ENCODE measurements at regions of chr4 and their contacts with region 1.

Region 1: GRCh38 chr4:30770049-30770549 is 49.9 kb downstream of the PCDH7 start:
- DNase-seq: peak; percentile 97
- ATAC-seq: peak; percentile 77
- H3K4me3 ChIP-seq: no peak overlapping the region
- H3K27ac ChIP-seq: peak overlapping the region; percentile 100
- H3K4me1 ChIP-seq: peaks cover 77 to 98% of the 10 kb centered on the region in 2 experiments
- H3K27me3 ChIP-seq: no peaks in the 10 kb centered on the region
- CTCF ChIP-seq: 0 out of 6 replicates have a peak, but pooled peaks of 1 of the 3 experiments have one; percentile 5
- POLR2A ChIP-seq: no peak
- RAD21 ChIP-seq: peak; percentile 46

Region 2: GRCh38 chr4:30783751-30784150 is 13.7 kb after region 1 on chr4:
- CTCF ChIA-PET with region 1: no interaction called
- POLR2A ChIA-PET with region 1: interaction called, 40 read pairs
- RAD21 ChIA-PET with region 1: no interaction called
- intact Hi-C with region 1: no loop called
- DNase-seq: peak; percentile 52
- ATAC-seq: peak; percentile 46
- H3K4me3 ChIP-seq: no peak overlapping the region
- H3K27ac ChIP-seq: peak overlapping the region; percentile 100
- H3K4me1 ChIP-seq: peaks cover 44 to 86% of the 10 kb centered on the region in 2 experiments
- H3K27me3 ChIP-seq: no peaks in the 10 kb centered on the region
- CTCF ChIP-seq: no peak
- POLR2A ChIP-seq: no peak
- RAD21 ChIP-seq: no peak

Region 3: DNA sequence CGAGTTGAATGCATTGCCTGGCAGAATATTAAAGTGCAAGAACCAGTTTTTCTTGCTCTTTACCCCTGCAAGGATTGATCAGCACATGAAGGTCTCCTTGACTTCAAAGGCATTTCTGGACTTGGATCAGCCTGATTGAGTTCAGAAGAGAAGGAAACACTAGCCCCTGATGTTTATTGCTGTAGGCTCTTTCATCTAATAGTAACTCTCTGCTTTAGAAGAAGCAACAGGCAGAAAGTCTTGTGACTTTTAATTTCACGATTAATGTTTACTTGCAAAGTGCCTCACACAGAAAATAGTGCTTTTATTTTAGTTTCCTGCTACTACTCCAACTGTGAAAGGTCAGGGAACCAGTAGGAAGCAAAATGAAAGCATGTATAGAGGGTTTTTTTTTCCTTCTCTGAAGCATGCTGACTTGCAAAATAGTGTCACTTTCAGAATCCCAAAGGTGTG is 19.1 kb after region 1 on chr4:
- CTCF ChIA-PET with region 1: no interaction called
- POLR2A ChIA-PET with region 1: interaction called, 40 read pairs
- RAD21 ChIA-PET with region 1: no interaction called
- intact Hi-C with region 1: loop called (anchors 1 kb)
- DNase-seq: peak; percentile 92
- ATAC-seq: peak; percentile 78
- H3K4me3 ChIP-seq: peak overlapping the region in 1 of 2 experiments; percentile 11; a peak in 1 of 4 replicates
- H3K27ac ChIP-seq: peak overlapping the region; percentile 100
- H3K4me1 ChIP-seq: peaks cover 77 to 100% of the 10 kb centered on the region in 2 experiments
- H3K27me3 ChIP-seq: no peaks in the 10 kb centered on the region
- CTCF ChIP-seq: no peak
- POLR2A ChIP-seq: no peak
- RAD21 ChIP-seq: peak; percentile 28

Region 4: DNA sequence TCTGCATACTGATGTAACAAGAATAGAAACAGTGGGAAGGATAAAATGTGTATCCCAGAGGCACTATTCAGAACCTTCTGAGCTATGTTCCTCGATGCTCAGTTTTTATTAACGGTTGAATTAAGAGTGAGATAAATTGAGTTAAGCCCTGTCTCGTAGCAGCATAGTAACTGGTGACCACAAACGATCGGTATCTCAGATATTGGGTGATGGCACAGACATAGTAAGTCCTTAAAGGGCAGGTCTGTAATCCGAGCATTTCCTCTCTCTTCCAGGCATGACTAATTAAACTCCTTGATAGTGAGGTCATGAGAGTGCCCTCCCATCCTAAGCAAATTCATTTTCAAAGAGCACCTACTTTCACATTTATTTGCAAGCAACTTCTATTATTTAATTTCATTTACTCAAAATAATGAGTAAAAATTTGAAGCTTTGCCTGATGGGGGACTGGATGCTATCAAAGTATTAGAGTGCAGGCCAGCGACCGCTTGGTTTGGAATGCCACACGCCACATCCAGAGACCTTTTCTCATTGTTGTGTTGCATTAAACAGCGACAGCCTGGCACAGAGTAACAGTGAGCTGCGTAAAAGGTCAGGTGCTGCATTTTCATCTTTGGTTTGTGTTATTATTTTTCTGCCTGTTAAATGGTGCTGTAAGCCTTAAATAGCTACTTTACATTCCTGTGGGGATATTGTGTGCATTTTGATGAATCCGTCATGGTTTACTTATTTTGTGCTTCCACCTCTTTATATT is 51.9 kb after region 1 on chr4:
- CTCF ChIA-PET with region 1: no interaction called
- POLR2A ChIA-PET with region 1: interaction called, 41 read pairs
- RAD21 ChIA-PET with region 1: no interaction called
- intact Hi-C with region 1: no loop called
- DNase-seq: peak; percentile 94
- ATAC-seq: peak; percentile 89
- H3K4me3 ChIP-seq: peak overlapping the region; percentile 29 to 48
- H3K27ac ChIP-seq: peak overlapping the region; percentile 100
- H3K4me1 ChIP-seq: peaks cover 78 to 99% of the 10 kb centered on the region in 2 experiments
- H3K27me3 ChIP-seq: no peaks in the 10 kb centered on the region
- CTCF ChIP-seq: no peak
- POLR2A ChIP-seq: peak; percentile 24
- RAD21 ChIP-seq: peak; percentile 25; the same call in 1 of the 2 replicates

Region 5: DNA sequence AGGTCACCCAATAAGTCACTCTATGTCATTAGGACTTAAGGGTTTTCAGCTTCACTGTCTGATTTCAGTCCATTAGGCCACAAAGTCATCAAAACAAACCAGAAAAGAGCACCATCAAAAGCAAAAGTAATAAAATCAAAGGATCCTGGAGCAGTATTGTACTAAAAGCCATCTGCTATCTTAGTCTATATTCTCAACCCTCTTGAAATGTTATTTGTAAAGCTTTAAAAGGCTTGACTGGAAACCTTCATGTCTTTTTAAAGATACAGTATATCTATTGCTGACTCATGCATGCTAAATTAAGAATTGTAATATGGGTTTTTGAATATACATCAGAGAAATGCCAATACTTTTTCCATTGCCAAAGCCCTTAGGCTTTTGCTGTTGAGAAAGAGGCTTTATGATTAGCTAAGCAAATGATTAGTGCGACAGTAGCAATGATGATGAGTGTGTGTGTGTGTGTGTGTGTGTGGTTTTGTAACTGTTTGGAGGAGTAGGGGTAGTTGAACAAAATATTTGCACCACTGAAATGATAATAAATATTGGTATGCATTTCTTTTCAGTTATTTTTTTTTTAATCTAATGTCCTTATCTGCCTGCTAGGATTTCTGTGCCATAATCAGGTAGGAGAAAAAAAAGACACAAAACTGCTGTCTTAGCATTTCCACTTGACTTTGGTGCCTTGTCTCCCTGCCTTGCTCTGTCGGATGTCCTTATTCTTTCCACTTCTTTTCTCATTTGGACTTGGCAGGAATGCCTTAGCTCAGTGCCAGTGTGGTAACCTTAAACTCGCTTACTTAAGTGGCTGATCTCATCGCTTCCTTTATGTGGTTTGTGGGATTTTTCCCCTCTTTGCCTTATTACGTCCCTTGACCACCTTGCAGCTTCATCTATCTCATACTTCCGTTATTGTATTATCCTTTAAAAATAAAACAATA is 69.8 kb after region 1 on chr4:
- CTCF ChIA-PET with region 1: no interaction called
- POLR2A ChIA-PET with region 1: interaction called, 28 read pairs
- RAD21 ChIA-PET with region 1: interaction called, 3 to 6 read pairs
- intact Hi-C with region 1: no loop called
- DNase-seq: peak; percentile 97
- ATAC-seq: peak; percentile 77
- H3K4me3 ChIP-seq: peak overlapping the region in 1 of 2 experiments; percentile 18; a peak in 1 of 4 replicates
- H3K27ac ChIP-seq: peak overlapping the region; percentile 100
- H3K4me1 ChIP-seq: peaks cover 83 to 99% of the 10 kb centered on the region in 2 experiments
- H3K27me3 ChIP-seq: no peaks in the 10 kb centered on the region
- CTCF ChIP-seq: no peak
- POLR2A ChIP-seq: no peak
- RAD21 ChIP-seq: peak; percentile 22; the same call in 1 of the 2 replicates

Region 6: GRCh38 chr4:30863021-30863420 is 92.9 kb after region 1 on chr4:
- CTCF ChIA-PET with region 1: no interaction called
- POLR2A ChIA-PET with region 1: interaction called, 17 read pairs
- RAD21 ChIA-PET with region 1: no interaction called
- intact Hi-C with region 1: loop called (anchors 5 kb)
- DNase-seq: no peak
- ATAC-seq: no peak
- H3K4me3 ChIP-seq: no peak overlapping the region
- H3K27ac ChIP-seq: peak overlapping the region; percentile 100
- H3K4me1 ChIP-seq: peaks cover 90 to 100% of the 10 kb centered on the region in 2 experiments
- H3K27me3 ChIP-seq: no peaks in the 10 kb centered on the region
- CTCF ChIP-seq: no peak
- POLR2A ChIP-seq: no peak
- RAD21 ChIP-seq: peak; percentile 34; the same call in 1 of the 2 replicates

Region 7: GRCh38 chr4:31020363-31020762 is 250.3 kb after region 1 on chr4:
- CTCF ChIA-PET with region 1: no interaction called
- POLR2A ChIA-PET with region 1: no interaction called
- RAD21 ChIA-PET with region 1: no interaction called
- intact Hi-C with region 1: loop called (anchors 5 kb)
- DNase-seq: no peak
- ATAC-seq: peak; percentile 38
- H3K4me3 ChIP-seq: peak overlapping the region in 1 of 2 experiments; percentile 24; a peak in 2 of 4 replicates
- H3K27ac ChIP-seq: peak overlapping the region; percentile 91
- H3K4me1 ChIP-seq: peaks cover 95% of the 10 kb centered on the region in 2 experiments
- H3K27me3 ChIP-seq: no peaks in the 10 kb centered on the region
- CTCF ChIP-seq: no peak
- POLR2A ChIP-seq: no peak
- RAD21 ChIP-seq: no peak